CD8-positive, alpha-beta T cell (primary cell): ENCODE measurements at regions of chr2 and their contacts with region 1.

Region 1: GRCh38 chr2:231687133-231687852 is 21.0 kb upstream of the PTMA start:
- DNase-seq: peak; percentile 39 to 82 (median 72)
- ATAC-seq: peak; percentile 95
- H3K4me3 ChIP-seq: no peak overlapping the region
- H3K4me3 Mint-ChIP-seq: no peak overlapping the region
- H3K27ac ChIP-seq: no peak overlapping the region
- H3K27ac Mint-ChIP-seq: no peak overlapping the region
- H3K4me1 ChIP-seq: no peaks in the 10 kb centered on the region
- H3K4me1 Mint-ChIP-seq: peaks cover 5% of the 10 kb centered on the region
- H3K27me3 ChIP-seq: no peaks in the 10 kb centered on the region
- H3K27me3 Mint-ChIP-seq: peaks cover 6% of the 10 kb centered on the region
- CTCF ChIP-seq: peak; percentile 63

Region 2: GRCh38 chr2:231308631-231309428 is 378.5 kb before region 1 on chr2:
- CTCF ChIA-PET with region 1: no interaction called
- POLR2A ChIA-PET with region 1: no interaction called
- intact Hi-C with region 1: no loop called
- DNase-seq: no peak
- ATAC-seq: no peak
- H3K4me3 ChIP-seq: no peak overlapping the region
- H3K4me3 Mint-ChIP-seq: no peak overlapping the region
- H3K27ac ChIP-seq: no peak overlapping the region
- H3K27ac Mint-ChIP-seq: no peak overlapping the region
- H3K4me1 ChIP-seq: no peaks in the 10 kb centered on the region
- H3K4me1 Mint-ChIP-seq: no peaks in the 10 kb centered on the region
- H3K27me3 ChIP-seq: no peaks in the 10 kb centered on the region
- H3K27me3 Mint-ChIP-seq: no peaks in the 10 kb centered on the region
- CTCF ChIP-seq: no peak

Region 3: DNA sequence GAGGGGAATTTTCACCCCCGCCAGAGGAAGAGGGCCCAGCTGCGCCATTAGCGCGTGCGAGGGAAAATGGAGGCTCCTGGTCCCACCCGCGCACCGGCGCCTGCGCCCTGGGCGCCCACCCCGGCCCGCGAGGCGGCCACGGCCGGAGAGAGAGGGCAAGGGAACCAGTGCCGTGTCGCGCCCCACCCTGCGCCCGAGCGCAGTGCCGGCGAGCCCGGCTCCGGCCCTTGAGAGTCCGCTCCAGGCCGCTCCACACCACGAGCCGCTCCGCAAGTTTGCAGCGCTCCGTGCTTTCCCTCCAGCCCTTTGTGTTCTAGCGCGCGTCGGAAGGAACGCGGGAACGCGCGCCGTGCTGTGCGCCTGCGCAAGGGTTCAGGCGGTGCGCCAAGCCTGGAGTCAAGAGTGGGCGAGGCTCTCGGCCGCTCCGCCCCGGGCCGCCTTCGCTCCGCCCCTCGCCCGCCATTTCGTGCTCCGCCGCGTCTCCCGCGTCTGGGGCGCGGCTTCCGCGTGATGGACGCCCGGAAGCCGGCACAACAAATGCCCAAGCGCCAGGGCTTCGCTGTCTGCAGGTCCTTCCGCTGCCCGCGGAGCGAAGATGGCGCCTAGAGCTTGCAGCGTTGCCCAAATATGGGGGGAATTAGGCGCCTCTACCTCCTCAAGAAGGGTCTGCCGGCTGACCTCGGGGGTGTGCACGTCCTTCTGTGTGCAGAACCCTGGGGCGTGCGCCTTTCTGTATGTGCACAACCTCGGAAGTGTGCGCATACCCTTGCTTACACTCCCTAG is 25.1 kb before region 1 on chr2:
- CTCF ChIA-PET with region 1: no interaction called
- POLR2A ChIA-PET with region 1: interaction called, 5 read pairs
- intact Hi-C with region 1: loop called in 1 of 2 experiments (anchors 1 kb)
- DNase-seq: peak; percentile 94 to 99 (median 96)
- ATAC-seq: peak; percentile 91
- H3K4me3 ChIP-seq: peak overlapping the region; percentile 60 to 82
- H3K4me3 Mint-ChIP-seq: peak overlapping the region; percentile 77
- H3K27ac ChIP-seq: peak overlapping the region; percentile 87 to 94
- H3K27ac Mint-ChIP-seq: peak overlapping the region; percentile 97
- H3K4me1 ChIP-seq: peaks cover 16% of the 10 kb centered on the region
- H3K4me1 Mint-ChIP-seq: peaks cover 14% of the 10 kb centered on the region
- H3K27me3 ChIP-seq: no peaks in the 10 kb centered on the region
- H3K27me3 Mint-ChIP-seq: no peaks in the 10 kb centered on the region
- CTCF ChIP-seq: no peak

Region 4: GRCh38 chr2:231701456-231702373 is 14.4 kb after region 1 on chr2:
- CTCF ChIA-PET with region 1: interaction called, 28 read pairs
- POLR2A ChIA-PET with region 1: interaction called, 6 read pairs
- intact Hi-C with region 1: no loop called
- DNase-seq: no peak
- ATAC-seq: no peak
- H3K4me3 ChIP-seq: no peak overlapping the region
- H3K4me3 Mint-ChIP-seq: no peak overlapping the region
- H3K27ac ChIP-seq: no peak overlapping the region
- H3K27ac Mint-ChIP-seq: no peak overlapping the region
- H3K4me1 ChIP-seq: peaks cover 13% of the 10 kb centered on the region
- H3K4me1 Mint-ChIP-seq: peaks cover 18% of the 10 kb centered on the region
- H3K27me3 ChIP-seq: no peaks in the 10 kb centered on the region
- H3K27me3 Mint-ChIP-seq: no peaks in the 10 kb centered on the region
- CTCF ChIP-seq: no peak

Region 5: GRCh38 chr2:231720987-231721966 is 34.0 kb after region 1 on chr2:
- CTCF ChIA-PET with region 1: interaction called, 783 read pairs
- POLR2A ChIA-PET with region 1: no interaction called
- intact Hi-C with region 1: no loop called
- DNase-seq: peak in 1 of 9 experiments; percentile 23
- ATAC-seq: no peak
- H3K4me3 ChIP-seq: no peak overlapping the region
- H3K4me3 Mint-ChIP-seq: no peak overlapping the region
- H3K27ac ChIP-seq: no peak overlapping the region
- H3K27ac Mint-ChIP-seq: no peak overlapping the region
- H3K4me1 ChIP-seq: no peaks in the 10 kb centered on the region
- H3K4me1 Mint-ChIP-seq: no peaks in the 10 kb centered on the region
- H3K27me3 ChIP-seq: no peaks in the 10 kb centered on the region
- H3K27me3 Mint-ChIP-seq: no peaks in the 10 kb centered on the region
- CTCF ChIP-seq: no peak